HCT116 (cell line): ENCODE measurements at regions of chr1 and their contacts with region 1.

Region 1: GRCh38 chr1:12539705-12540579 is 78.1 kb downstream of the DHRS3 start:
- DNase-seq: peak; percentile 83
- ATAC-seq: peak; percentile 75
- H3K4me3 ChIP-seq: peak overlapping the region; percentile 25 to 48
- H3K27ac ChIP-seq: peak overlapping the region; percentile 24; the same call in 1 of the 2 replicates
- H3K4me1 ChIP-seq: peaks cover 27 to 51% of the 10 kb centered on the region in 2 experiments
- H3K27me3 ChIP-seq: no peaks in the 10 kb centered on the region
- CTCF ChIP-seq: no peak
- POLR2A ChIP-seq: no peak
- RAD21 ChIP-seq: peak; percentile 57

Region 2: DNA sequence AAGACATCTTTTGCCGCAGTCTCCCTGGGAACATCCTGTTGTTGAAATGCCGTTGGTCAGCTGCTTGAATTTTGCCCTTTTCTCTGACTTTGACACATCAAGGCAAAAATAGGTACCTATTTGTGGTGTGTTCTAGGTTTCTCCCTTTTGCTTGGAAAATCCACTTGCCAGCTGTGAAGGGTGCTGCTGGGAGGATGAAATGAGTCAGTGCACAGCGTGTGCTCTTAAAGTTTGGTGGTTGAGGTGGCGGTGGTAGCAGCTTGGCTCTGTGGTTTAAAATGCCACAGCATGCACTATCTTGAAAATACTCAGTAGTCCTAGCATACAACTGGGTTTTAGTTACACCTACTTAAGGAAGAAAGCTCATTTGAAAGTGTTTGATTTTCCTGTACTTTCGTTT is 105.8 kb before region 1 on chr1:
- CTCF ChIA-PET with region 1: no interaction called
- POLR2A ChIA-PET with region 1: no interaction called
- RAD21 ChIA-PET with region 1: no interaction called
- intact Hi-C with region 1: loop called (anchors 5 kb)
- DNase-seq: peak; percentile 51
- ATAC-seq: peak; percentile 73
- H3K4me3 ChIP-seq: peak overlapping the region in 1 of 2 experiments; percentile 31; a peak in 2 of 4 replicates
- H3K27ac ChIP-seq: peak overlapping the region; percentile 66; the same call in 1 of the 2 replicates
- H3K4me1 ChIP-seq: peaks cover 40 to 58% of the 10 kb centered on the region in 2 experiments
- H3K27me3 ChIP-seq: no peaks in the 10 kb centered on the region
- CTCF ChIP-seq: no peak
- POLR2A ChIP-seq: no peak
- RAD21 ChIP-seq: no peak; the same call in 1 of the 2 replicates

Region 3: GRCh38 chr1:12467570-12468286 is 72.2 kb before region 1 on chr1:
- CTCF ChIA-PET with region 1: no interaction called
- POLR2A ChIA-PET with region 1: no interaction called
- RAD21 ChIA-PET with region 1: no interaction called
- intact Hi-C with region 1: loop called (anchors 1 kb)
- DNase-seq: no peak
- ATAC-seq: no peak
- H3K4me3 ChIP-seq: no peak overlapping the region
- H3K27ac ChIP-seq: no peak overlapping the region
- H3K4me1 ChIP-seq: peaks cover 31 to 47% of the 10 kb centered on the region in 2 experiments
- H3K27me3 ChIP-seq: no peaks in the 10 kb centered on the region
- CTCF ChIP-seq: no peak
- POLR2A ChIP-seq: no peak
- RAD21 ChIP-seq: no peak

Region 4: GRCh38 chr1:12579793-12580499 is 40.0 kb after region 1 on chr1:
- CTCF ChIA-PET with region 1: no interaction called
- POLR2A ChIA-PET with region 1: no interaction called
- RAD21 ChIA-PET with region 1: no interaction called
- intact Hi-C with region 1: no loop called
- DNase-seq: no peak
- ATAC-seq: no peak
- H3K4me3 ChIP-seq: no peak overlapping the region
- H3K27ac ChIP-seq: no peak overlapping the region
- H3K4me1 ChIP-seq: peaks cover 5 to 12% of the 10 kb centered on the region in 2 experiments; a peak in 3 of 4 replicates
- H3K27me3 ChIP-seq: no peaks in the 10 kb centered on the region
- CTCF ChIP-seq: no peak
- POLR2A ChIP-seq: no peak
- RAD21 ChIP-seq: no peak